GM12878 (cell line): ENCODE measurements at regions of chr6 and their contacts with region 1.

Region 1: GRCh38 chr6:137661601-137662000 is 167.4 kb upstream of the OLIG3 start:
- DNase-seq: no peak
- ATAC-seq: peak; percentile 69
- H3K4me3 ChIP-seq: no peak overlapping the region
- H3K27ac ChIP-seq: no peak overlapping the region
- H3K4me1 ChIP-seq: peaks cover 5% of the 10 kb centered on the region; the same call in 1 of the 2 replicates
- H3K27me3 ChIP-seq: no peaks in the 10 kb centered on the region
- CTCF ChIP-seq: peak; percentile 51 to 75 (median 68)
- EP300 ChIP-seq: no peak
- POLR2A ChIP-seq: no peak
- RAD21 ChIP-seq: peak; percentile 66

Region 2: DNA sequence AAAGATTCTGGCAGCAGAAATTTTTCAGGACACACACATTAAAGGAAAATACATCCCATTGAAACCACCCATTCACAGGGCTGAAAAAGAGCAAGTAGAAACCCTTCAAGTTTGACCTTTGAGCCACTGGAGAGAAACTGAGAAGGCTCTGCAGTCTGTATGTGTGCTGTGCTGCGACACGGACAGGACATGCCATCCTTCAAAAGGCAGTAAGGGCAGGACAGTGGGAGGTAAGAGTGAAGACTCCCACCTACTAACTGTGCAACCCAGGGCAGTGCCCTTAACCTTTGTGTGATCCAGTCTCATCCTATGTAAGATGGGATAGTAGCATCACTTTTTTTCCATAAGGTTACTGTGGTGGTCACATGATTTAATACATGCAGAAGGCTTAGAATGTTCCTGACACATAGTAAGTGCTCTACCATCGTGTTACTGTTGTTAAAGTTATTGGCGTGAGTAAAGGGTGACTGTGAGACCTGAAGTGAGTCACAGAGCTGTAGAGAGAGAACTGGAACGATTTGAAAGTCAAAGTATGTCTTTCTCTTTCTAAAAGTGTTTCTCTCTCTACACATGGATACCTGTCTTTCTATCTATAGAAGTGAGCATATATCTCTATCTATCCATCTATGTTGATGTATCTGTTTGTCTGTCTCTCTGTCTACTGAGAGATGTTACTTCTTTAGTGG is 13.7 kb before region 1 on chr6:
- CTCF ChIA-PET with region 1: interaction called, 34 read pairs
- POLR2A ChIA-PET with region 1: interaction called, 24 read pairs
- RAD21 ChIA-PET with region 1: interaction called, 19 read pairs
- SMC1A ChIA-PET with region 1: interaction called, 30 read pairs
- in situ Hi-C with region 1: no loop called
- intact Hi-C with region 1: no loop called
- DNase-seq: no peak
- ATAC-seq: peak; percentile 73
- H3K4me3 ChIP-seq: no peak overlapping the region
- H3K27ac ChIP-seq: no peak overlapping the region
- H3K4me1 ChIP-seq: peaks cover 6% of the 10 kb centered on the region
- H3K27me3 ChIP-seq: no peaks in the 10 kb centered on the region
- CTCF ChIP-seq: no peak
- EP300 ChIP-seq: no peak
- POLR2A ChIP-seq: no peak
- RAD21 ChIP-seq: no peak

Region 3: GRCh38 chr6:137688230-137688971 is 26.8 kb after region 1 on chr6:
- CTCF ChIA-PET with region 1: interaction called, 9 read pairs
- POLR2A ChIA-PET with region 1: interaction called, 3 read pairs
- RAD21 ChIA-PET with region 1: interaction called, 5 read pairs
- SMC1A ChIA-PET with region 1: interaction called, 236 read pairs
- in situ Hi-C with region 1: no loop called
- intact Hi-C with region 1: no loop called
- DNase-seq: no peak
- ATAC-seq: no peak
- H3K4me3 ChIP-seq: no peak overlapping the region
- H3K27ac ChIP-seq: no peak overlapping the region
- H3K4me1 ChIP-seq: no peaks in the 10 kb centered on the region
- H3K27me3 ChIP-seq: no peaks in the 10 kb centered on the region
- CTCF ChIP-seq: no peak
- EP300 ChIP-seq: no peak
- POLR2A ChIP-seq: no peak
- RAD21 ChIP-seq: no peak

Region 4: DNA sequence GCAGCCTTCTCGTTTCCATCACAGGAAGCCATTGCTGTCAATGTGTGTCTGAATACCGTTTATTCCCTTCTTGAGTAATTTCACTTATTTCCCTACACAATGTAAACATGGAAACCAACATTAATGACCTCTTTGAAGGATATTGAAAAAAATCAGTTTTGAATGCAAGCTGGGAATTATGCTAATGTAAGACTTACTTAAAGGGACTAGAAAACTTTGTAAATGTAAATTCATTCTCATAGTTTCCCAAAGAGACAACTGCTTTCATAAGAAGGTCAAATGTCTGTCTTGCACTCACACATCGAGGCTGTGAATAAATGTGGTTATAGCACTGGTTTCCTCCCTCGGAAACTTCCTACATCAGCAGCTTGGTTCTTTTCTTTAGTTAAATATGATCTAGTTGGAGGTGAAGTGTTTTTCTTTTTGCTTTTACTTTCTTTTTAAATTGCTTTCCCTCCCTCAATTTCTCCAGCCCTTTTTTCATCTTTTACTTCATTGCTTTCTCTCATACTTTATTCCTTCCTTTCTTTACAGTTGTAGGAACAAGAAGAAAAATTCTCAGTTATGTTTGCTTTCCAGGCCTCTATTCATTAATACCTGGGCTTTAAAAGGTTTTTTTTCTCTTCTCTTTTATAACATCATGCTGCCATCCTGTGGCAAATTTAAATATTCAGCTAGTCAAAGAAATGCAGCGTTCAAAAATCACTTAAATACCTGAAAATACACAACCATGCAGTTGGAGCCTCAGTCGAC is 313.8 kb after region 1 on chr6:
- CTCF ChIA-PET with region 1: interaction called, 5 read pairs
- POLR2A ChIA-PET with region 1: interaction called, 3 read pairs
- RAD21 ChIA-PET with region 1: interaction called, 6 read pairs
- SMC1A ChIA-PET with region 1: interaction called, 7 read pairs
- in situ Hi-C with region 1: no loop called
- intact Hi-C with region 1: loop called (anchors 5 kb)
- DNase-seq: peak; percentile 53
- ATAC-seq: peak; percentile 67
- H3K4me3 ChIP-seq: peak overlapping the region; percentile 1; the same call in 1 of the 2 replicates
- H3K27ac ChIP-seq: peak overlapping the region; percentile 34
- H3K4me1 ChIP-seq: peaks cover 36% of the 10 kb centered on the region
- H3K27me3 ChIP-seq: no peaks in the 10 kb centered on the region
- CTCF ChIP-seq: peak; percentile 23 to 62 (median 44); a peak in 5 of 6 replicates
- EP300 ChIP-seq: no peak
- POLR2A ChIP-seq: no peak
- RAD21 ChIP-seq: peak; percentile 81